CD4-positive, alpha-beta memory T cell (primary cell): ENCODE measurements at regions of chr15 and their contacts with region 1.

Region 1: DNA sequence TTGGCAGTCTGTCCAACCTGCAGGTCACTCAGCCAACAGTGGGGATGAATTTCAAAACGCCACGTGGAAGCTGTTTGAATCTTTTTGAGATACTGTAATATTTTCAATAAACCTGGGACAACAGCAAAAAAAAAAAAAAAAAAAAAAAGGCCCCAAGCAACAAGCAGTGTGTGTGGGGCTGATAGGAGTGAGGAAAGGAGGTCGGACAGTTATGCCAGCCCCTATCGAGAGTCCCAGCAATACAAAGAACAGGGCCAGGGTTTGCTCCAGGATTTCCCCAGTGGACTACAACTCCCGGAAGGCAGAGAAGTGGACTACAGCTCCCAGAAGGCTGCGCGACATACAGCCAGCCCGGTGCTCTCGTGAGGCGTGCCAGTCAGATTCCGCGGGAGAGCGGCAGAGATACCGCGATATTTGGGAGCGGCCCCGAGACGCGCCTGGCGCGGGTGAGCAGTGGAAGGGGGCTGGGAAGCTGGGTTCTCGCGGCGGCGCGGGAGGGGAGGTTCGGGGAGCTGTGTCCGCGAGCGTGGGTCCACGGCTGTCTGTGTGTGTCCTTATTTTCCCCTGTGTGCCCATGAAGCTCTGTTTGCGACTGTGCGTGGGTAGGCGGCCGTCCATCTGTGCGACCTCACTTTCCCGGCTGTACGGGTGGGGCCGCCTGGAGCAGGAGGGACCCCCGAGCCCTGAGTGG is at the start of gene PPCDC:
- DNase-seq: peak; percentile 91 to 94 (median 92)
- H3K4me3 ChIP-seq: peak within 1 kb of the TSS; percentile 95 to 100
- H3K4me3 Mint-ChIP-seq: peak within 1 kb of the TSS; percentile 92 to 99 (median 96)
- H3K27ac ChIP-seq: peak within 1 kb of the TSS; percentile 76
- H3K27ac Mint-ChIP-seq: peak within 1 kb of the TSS; percentile 71 to 97 (median 93)
- H3K4me1 ChIP-seq: peaks cover 20% of the 10 kb centered on the region
- H3K4me1 Mint-ChIP-seq: peaks cover 11 to 28% (median 18%) of the 10 kb centered on the region in 4 donors
- H3K27me3 ChIP-seq: no peaks in the 10 kb centered on the region
- H3K27me3 Mint-ChIP-seq: no peaks in the 10 kb centered on the region
- total RNA-seq, gene PPCDC: 14.1 to 15.2 TPM

Region 2: DNA sequence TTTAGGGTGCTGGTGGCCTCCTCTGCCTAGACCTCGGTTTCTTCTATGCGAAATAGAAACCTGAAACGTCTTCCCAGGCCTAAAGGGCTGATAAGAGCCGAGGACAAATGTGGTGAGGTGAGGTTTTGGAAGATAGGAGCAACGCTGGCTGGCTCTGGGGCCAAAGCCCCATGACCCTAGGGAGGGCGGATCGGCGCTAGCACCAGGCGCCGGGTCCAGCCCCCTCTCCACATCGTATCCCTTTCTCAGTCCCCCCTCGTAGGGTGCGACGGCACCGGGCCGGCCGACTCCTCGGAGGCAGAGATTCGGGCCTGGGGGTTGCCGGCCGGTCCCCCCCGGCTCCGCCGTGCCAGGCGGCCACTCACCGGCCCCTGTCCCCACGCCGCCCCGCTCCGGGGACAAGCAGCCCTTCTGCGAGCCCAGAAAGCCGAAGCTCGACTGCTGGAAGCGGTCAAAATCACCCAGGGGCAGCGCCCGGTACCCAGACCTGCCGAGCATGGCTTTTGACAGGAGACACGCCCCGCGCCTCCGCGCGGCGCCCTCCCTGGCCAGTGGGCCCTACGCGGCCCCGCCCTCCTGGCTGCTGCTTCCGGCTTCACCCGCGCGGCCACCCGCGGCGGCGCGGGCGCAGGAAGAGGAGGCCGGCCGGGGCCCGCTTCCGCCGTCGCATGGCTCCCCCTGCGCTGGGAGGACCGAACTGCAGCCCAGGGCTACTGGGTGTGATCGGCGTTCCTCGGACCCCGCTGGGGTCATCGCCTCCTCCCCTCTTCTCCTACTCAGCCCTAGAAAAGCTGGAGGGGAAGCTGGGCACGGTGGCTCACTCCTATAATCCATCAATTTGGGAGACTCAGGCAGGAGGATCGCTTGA is 1031.4 kb before region 1 on chr15 and contains the start of gene STOML1:
- CTCF ChIA-PET with region 1: no interaction called
- POLR2A ChIA-PET with region 1: no interaction called
- intact Hi-C with region 1: loop called (anchors 10 kb)
- DNase-seq: peak; percentile 91 to 94 (median 91)
- H3K4me3 ChIP-seq: peak within 1 kb of the TSS; percentile 66 to 72
- H3K4me3 Mint-ChIP-seq: peak within 1 kb of the TSS; percentile 80 to 99 (median 84)
- H3K27ac ChIP-seq: peak within 1 kb of the TSS; percentile 67
- H3K27ac Mint-ChIP-seq: peak within 1 kb of the TSS; percentile 75 to 90 (median 86)
- H3K4me1 ChIP-seq: peaks cover 42% of the 10 kb centered on the region
- H3K4me1 Mint-ChIP-seq: peaks cover 26 to 59% (median 39%) of the 10 kb centered on the region in 4 donors
- H3K27me3 ChIP-seq: no peaks in the 10 kb centered on the region
- H3K27me3 Mint-ChIP-seq: no peaks in the 10 kb centered on the region
- total RNA-seq, gene STOML1: 10.8 to 11.1 TPM

Region 3: DNA sequence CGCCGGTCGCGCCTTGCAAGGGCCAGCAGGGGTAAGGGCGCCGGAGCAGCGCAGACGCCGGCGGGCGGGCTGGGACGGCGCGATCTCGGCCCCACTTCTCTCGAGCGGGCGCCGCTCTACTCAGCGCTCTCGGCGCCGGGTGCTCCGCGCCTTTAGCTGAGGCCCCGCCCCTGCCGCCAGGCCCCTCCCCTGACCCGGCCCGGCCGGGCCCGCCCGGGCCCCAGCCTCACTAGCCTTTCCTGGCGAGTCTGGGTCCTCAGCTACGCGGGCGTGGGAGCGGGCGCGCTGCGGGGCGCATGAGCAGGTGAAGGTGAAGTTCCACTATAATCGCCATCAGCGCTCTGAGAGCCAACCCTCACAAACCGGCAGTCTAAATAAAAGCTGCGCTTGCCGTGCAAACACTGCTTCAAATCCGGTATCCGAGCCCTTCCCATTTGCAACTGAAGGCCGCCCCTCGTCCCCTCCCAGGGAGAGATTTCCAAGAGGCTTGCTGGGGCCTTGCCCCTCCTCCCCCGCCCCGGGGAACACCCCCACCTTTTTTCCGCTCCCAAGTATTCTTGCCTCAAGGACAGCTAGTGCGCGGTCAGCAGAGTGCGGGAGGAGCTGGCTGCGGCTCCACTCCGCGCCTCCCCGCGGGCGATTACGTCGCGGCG is 66.6 kb before region 1 on chr15 and contains the start of gene RPP25:
- CTCF ChIA-PET with region 1: no interaction called
- POLR2A ChIA-PET with region 1: interaction called, 5 read pairs
- intact Hi-C with region 1: loop called (anchors 1 kb)
- DNase-seq: peak; percentile 43 to 56 (median 52)
- H3K4me3 ChIP-seq: peak within 1 kb of the TSS; percentile 12 to 68
- H3K4me3 Mint-ChIP-seq: peak within 1 kb of the TSS; percentile 75 to 82 (median 80)
- H3K27ac ChIP-seq: no peak within 1 kb of the TSS
- H3K27ac Mint-ChIP-seq: no peak within 1 kb of the TSS
- H3K4me1 ChIP-seq: peaks cover 40% of the 10 kb centered on the region
- H3K4me1 Mint-ChIP-seq: peaks cover 6 to 35% (median 19%) of the 10 kb centered on the region in 4 donors
- H3K27me3 ChIP-seq: peaks cover 19% of the 10 kb centered on the region
- H3K27me3 Mint-ChIP-seq: peaks cover 19 to 20% of the 10 kb centered on the region in 2 donors
- total RNA-seq, gene RPP25: 2.6 to 2.8 TPM

Region 4: DNA sequence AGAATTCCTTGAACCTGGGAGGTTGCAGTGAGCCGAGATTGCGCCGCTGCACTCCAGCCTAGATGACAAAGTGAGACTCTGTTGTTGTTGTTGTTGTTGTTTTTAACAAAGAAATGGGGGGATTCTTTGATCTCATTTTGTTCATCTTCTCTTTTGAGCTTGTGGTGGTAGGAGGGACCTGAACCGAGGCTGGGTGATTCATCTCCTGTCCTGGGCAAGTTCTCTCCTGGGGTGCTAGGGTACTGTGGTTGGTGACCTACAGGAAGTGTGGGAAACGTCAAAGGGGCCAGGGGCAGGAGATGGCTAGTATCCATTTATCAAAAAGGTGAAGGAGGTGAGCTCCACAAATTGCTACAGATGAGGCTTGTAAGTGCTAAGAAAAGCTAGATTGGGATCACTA is 14.3 kb after region 1 on chr15:
- CTCF ChIA-PET with region 1: no interaction called
- POLR2A ChIA-PET with region 1: no interaction called
- intact Hi-C with region 1: no loop called
- DNase-seq: no peak
- H3K4me3 ChIP-seq: no peak overlapping the region
- H3K4me3 Mint-ChIP-seq: no peak overlapping the region
- H3K27ac ChIP-seq: no peak overlapping the region
- H3K27ac Mint-ChIP-seq: peak overlapping the region in 1 of 7 donors; percentile 78
- H3K4me1 ChIP-seq: peaks cover 3% of the 10 kb centered on the region
- H3K4me1 Mint-ChIP-seq: peaks cover 7 to 35% (median 13%) of the 10 kb centered on the region in 4 donors
- H3K27me3 ChIP-seq: no peaks in the 10 kb centered on the region
- H3K27me3 Mint-ChIP-seq: no peaks in the 10 kb centered on the region

Region 5: GRCh38 chr15:75201609-75202250 is 178.4 kb after region 1 on chr15 and contains the start of gene C15orf39:
- CTCF ChIA-PET with region 1: interaction called, 126 read pairs
- POLR2A ChIA-PET with region 1: interaction called, 23 read pairs
- intact Hi-C with region 1: loop called (anchors 1 kb)
- DNase-seq: peak; percentile 71 to 87 (median 83)
- H3K4me3 ChIP-seq: peak within 1 kb of the TSS; percentile 65 to 70
- H3K4me3 Mint-ChIP-seq: peak within 1 kb of the TSS; percentile 89 to 97 (median 94)
- H3K27ac ChIP-seq: peak within 1 kb of the TSS; percentile 69
- H3K27ac Mint-ChIP-seq: peak within 1 kb of the TSS; percentile 90 to 96 (median 93)
- H3K4me1 ChIP-seq: peaks cover 40% of the 10 kb centered on the region
- H3K4me1 Mint-ChIP-seq: peaks cover 16 to 58% (median 30%) of the 10 kb centered on the region in 4 donors
- H3K27me3 ChIP-seq: no peaks in the 10 kb centered on the region
- H3K27me3 Mint-ChIP-seq: no peaks in the 10 kb centered on the region
- total RNA-seq, gene C15orf39: 25.9 to 27.0 TPM

Region 6: DNA sequence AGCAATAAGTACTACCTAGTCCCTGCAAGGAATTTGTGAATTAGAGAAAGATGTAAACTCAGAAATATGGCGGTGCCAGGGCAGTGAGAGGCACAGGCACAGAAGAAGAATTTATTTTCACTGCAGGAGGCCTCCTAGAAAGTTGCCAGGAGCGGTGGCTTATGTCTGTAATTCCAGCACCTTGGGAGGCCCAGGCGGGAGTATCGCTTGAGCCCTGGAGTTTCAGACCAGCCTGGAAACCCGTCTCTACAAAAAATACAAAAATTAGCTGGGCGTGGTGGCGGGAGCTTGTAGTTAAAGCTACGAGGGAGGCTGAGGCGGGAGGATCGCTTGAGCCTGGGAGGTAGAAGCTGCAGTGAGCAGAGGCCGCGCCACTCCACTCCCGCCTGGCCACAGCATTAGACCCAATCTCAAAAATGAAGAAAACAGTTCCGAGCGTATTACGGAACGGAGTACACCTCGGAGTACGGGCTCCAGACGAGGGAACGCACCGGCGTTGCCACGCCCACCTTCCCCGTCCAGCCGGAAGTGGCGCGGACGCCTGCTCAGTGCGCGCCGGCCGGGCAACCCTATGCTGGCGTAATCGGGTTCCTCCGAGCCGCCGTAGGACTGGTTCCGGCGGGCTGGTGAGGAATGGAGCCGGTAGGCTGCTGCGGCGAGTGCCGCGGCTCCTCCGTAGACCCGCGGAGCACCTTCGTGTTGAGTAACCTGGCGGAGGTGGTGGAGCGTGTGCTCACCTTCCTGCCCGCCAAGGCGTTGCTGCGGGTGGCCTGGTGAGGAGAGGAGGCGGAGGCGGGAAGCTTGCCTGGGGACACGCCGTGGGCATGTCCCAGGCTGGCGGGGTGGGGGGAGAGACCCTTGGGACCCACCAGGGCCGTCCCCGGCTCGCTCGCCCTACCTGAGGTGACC is 880.3 kb after region 1 on chr15 and contains the start of gene FBXO22:
- CTCF ChIA-PET with region 1: no interaction called
- POLR2A ChIA-PET with region 1: no interaction called
- intact Hi-C with region 1: loop called (anchors 10 kb)
- DNase-seq: peak; percentile 86 to 89 (median 87)
- H3K4me3 ChIP-seq: peak within 1 kb of the TSS; percentile 80 to 96
- H3K4me3 Mint-ChIP-seq: peak within 1 kb of the TSS; percentile 96 to 99 (median 98)
- H3K27ac ChIP-seq: peak within 1 kb of the TSS; percentile 70
- H3K27ac Mint-ChIP-seq: peak within 1 kb of the TSS; percentile 93 to 98 (median 96)
- H3K4me1 ChIP-seq: peaks cover 31% of the 10 kb centered on the region
- H3K4me1 Mint-ChIP-seq: peaks cover 19 to 55% (median 39%) of the 10 kb centered on the region in 4 donors
- H3K27me3 ChIP-seq: no peaks in the 10 kb centered on the region
- H3K27me3 Mint-ChIP-seq: no peaks in the 10 kb centered on the region
- total RNA-seq, gene FBXO22: 29.7 to 30.1 TPM